Activated CD8-positive, alpha-beta T cell treated with anti-CD3 and anti-CD28 coated beads for 36 hours (primary cell): ENCODE measurements at regions of chr16 and their contacts with region 1.

Region 1: GRCh38 chr16:4679850-4680636 is 13.3 kb upstream of the NUDT16L1 start:
- DNase-seq: peak; percentile 28
- ATAC-seq: no peak
- H3K4me3 Mint-ChIP-seq: peak overlapping the region; percentile 7
- H3K27ac Mint-ChIP-seq: peak overlapping the region; percentile 24
- H3K4me1 Mint-ChIP-seq: peaks cover 42% of the 10 kb centered on the region
- H3K27me3 Mint-ChIP-seq: no peaks in the 10 kb centered on the region
- CTCF ChIP-seq: no peak

Region 2: GRCh38 chr16:4640572-4641305 is 39.3 kb before region 1 on chr16:
- CTCF ChIA-PET with region 1: no interaction called
- POLR2A ChIA-PET with region 1: no interaction called
- intact Hi-C with region 1: no loop called
- DNase-seq: no peak
- ATAC-seq: peak; percentile 64
- H3K4me3 Mint-ChIP-seq: no peak overlapping the region
- H3K27ac Mint-ChIP-seq: peak overlapping the region; percentile 34
- H3K4me1 Mint-ChIP-seq: peaks cover 36% of the 10 kb centered on the region
- H3K27me3 Mint-ChIP-seq: no peaks in the 10 kb centered on the region
- CTCF ChIP-seq: no peak

Region 3: DNA sequence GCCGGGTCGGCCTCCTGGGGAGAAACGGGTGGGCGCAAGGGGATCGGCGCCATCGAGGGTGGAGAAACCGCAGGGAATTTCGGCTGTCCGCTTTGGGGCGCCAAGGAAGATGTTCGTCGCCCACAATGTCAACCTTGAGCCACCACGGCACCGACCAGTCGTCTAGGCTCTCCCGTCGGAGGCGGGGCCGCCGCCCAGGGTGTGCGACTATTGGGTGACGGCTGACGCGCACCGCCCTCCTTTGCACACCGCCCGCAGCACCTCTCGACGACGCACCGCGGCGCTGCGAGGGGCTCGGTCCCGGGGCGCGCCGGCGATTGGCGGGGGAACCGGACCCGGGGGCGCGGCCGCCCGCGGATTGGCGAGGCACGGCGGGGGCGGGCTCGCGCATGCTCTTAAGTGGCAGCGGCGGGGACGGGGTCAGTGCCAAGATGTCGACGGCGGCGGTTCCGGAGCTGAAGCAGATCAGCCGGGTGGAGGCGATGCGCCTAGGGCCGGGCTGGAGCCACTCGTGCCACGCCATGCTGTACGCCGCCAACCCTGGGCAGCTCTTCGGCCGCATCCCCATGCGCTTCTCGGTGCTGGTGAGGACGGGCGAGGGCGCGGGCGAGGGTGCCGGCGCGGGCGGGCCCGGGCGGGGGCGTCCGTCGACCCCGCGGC is 13.4 kb after region 1 on chr16 and contains the start of gene NUDT16L1:
- CTCF ChIA-PET with region 1: interaction called, 6 read pairs
- POLR2A ChIA-PET with region 1: interaction called, 10 read pairs
- intact Hi-C with region 1: no loop called
- DNase-seq: peak; percentile 97
- ATAC-seq: peak; percentile 95
- H3K4me3 Mint-ChIP-seq: peak within 1 kb of the TSS; percentile 79
- H3K27ac Mint-ChIP-seq: peak within 1 kb of the TSS; percentile 83
- H3K4me1 Mint-ChIP-seq: peaks cover 16% of the 10 kb centered on the region
- H3K27me3 Mint-ChIP-seq: no peaks in the 10 kb centered on the region
- CTCF ChIP-seq: no peak
- total RNA-seq, gene NUDT16L1: 22.3 to 25.6 TPM